ENCODE measurements at regions of chr3 and their contacts with region 1.

Region 1: DNA sequence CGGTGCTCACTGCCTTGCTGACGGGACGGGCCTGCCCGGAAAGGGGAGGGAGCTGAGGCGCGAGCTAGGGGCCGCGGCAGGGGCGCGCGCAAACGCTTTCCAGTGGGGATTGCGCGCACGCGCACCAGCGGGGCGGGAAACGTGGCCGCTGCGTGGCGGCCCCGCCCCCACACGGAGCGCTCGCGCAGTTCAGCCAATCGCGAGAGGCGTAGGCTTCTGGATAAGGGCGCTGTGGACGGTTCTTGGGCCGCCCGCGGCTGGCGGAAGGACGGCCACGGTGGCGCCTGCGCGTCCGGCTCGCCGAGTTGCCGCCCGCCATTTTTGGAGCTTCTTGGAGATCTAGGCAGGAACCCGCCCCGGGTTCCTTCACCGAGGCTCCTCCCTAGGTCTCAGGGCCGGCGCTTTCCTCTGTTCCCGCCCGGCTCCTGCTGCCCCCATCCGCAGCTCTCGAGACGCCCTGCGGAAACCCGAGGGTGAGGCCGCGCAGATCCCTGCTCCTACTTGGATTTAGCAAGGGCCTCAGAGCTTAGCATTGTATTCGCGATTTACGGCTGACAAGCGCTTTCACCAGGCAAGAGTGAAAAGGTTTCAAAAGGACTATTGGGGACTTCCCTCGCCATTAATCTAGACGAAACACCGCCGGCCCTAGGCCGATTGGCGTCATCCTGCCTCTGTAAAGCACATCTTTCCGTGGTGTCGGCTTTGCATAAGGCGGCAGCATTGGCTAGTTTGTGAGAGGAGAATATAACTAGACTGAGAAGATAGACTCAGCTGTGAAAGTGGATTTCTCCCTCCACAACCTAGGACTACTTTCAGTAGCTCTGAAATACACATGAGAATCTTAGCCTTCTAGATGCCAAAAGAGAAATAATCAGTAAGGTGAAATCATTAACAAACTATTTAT is 496 bp upstream of the STAG1 start:
- DNase-seq: peak; percentile 98
- ATAC-seq: peak; percentile 91
- H3K4me3 ChIP-seq: peak overlapping the region; percentile 77
- H3K27ac ChIP-seq: peak overlapping the region; percentile 99
- H3K4me1 ChIP-seq: peaks cover 3% of the 10 kb centered on the region
- H3K27me3 ChIP-seq: no peaks in the 10 kb centered on the region
- CTCF ChIP-seq: peak; percentile 37
- POLR2A ChIP-seq: peak; percentile 77; the same call in 1 of the 2 replicates
- RAD21 ChIP-seq: peak; percentile 35; the same call in 1 of the 2 replicates

Region 2: DNA sequence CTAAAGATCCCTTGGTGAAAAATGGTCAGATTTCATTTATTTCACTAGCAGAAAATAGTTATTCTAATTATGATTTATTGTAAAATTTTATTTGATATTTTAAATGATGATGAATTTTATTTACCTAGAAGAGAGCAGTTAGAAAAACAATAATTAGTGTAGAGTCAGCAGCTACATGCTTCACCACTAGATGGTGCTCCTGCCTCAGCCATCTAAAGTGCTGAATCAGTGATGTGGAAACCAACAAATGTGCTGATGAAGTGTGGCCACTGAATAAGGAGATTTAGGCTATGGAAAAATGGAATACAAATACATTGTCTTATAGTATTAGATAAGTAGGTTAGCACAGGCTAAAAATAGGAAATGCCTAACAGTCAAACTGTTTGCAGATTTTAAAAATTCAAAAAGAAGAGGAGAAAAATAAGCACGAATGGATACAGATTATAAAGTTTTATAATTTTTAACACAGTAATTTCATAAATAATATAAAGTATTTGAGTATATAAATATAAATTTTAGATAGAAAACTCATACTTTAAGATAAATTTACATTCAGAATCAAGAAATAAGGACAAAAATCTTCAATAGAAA is 677.4 kb before region 1 on chr3:
- CTCF ChIA-PET with region 1: interaction called, 7 read pairs
- POLR2A ChIA-PET with region 1: no interaction called
- dilution Hi-C with region 1: no loop called
- in situ Hi-C with region 1: loop called (anchors 10 kb)
- intact Hi-C with region 1: loop called (anchors 1 kb)
- DNase-seq: peak; percentile 80
- ATAC-seq: peak; percentile 62
- H3K4me3 ChIP-seq: no peak overlapping the region
- H3K27ac ChIP-seq: no peak overlapping the region
- H3K4me1 ChIP-seq: peaks cover 10% of the 10 kb centered on the region
- H3K27me3 ChIP-seq: no peaks in the 10 kb centered on the region
- CTCF ChIP-seq: peak; percentile 96
- POLR2A ChIP-seq: no peak
- RAD21 ChIP-seq: peak; percentile 95

Region 3: DNA sequence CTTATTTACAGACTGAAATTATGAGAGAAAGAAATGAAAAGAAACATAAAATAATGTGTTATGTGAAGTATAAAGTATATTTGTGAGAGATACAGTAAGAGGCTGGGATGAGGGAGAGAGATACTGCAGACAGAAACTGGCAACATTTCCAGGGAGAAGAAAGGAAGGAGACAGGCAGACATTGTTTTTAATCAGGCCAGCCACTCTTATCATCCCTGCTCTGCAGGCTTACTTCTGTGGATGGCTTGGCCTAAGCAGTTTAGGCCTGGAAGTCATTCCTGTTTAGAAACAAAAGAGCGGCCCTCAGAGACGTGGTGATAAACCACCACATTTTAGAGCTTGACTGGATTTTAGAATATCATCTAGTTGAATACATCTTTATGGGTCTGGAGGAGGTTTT is 490.1 kb before region 1 on chr3:
- CTCF ChIA-PET with region 1: no interaction called
- POLR2A ChIA-PET with region 1: no interaction called
- dilution Hi-C with region 1: no loop called
- in situ Hi-C with region 1: no loop called
- intact Hi-C with region 1: no loop called
- DNase-seq: no peak
- ATAC-seq: no peak
- H3K4me3 ChIP-seq: no peak overlapping the region
- H3K27ac ChIP-seq: no peak overlapping the region
- H3K4me1 ChIP-seq: peaks cover 3% of the 10 kb centered on the region; the same call in 1 of the 2 replicates
- H3K27me3 ChIP-seq: no peaks in the 10 kb centered on the region
- CTCF ChIP-seq: no peak
- POLR2A ChIP-seq: no peak
- RAD21 ChIP-seq: no peak

Region 4: GRCh38 chr3:136350132-136350531 is 402.5 kb before region 1 on chr3:
- CTCF ChIA-PET with region 1: interaction called, 16 read pairs
- POLR2A ChIA-PET with region 1: interaction called, 3 read pairs
- dilution Hi-C with region 1: no loop called
- in situ Hi-C with region 1: no loop called
- intact Hi-C with region 1: loop called (anchors 1 kb)
- DNase-seq: peak; percentile 98
- ATAC-seq: peak; percentile 76
- H3K4me3 ChIP-seq: peak overlapping the region; percentile 0; the same call in 1 of the 2 replicates
- H3K27ac ChIP-seq: peak overlapping the region; percentile 99
- H3K4me1 ChIP-seq: peaks cover 10% of the 10 kb centered on the region
- H3K27me3 ChIP-seq: no peaks in the 10 kb centered on the region
- CTCF ChIP-seq: no peak
- POLR2A ChIP-seq: no peak
- RAD21 ChIP-seq: no peak

Region 5: GRCh38 chr3:136464502-136464901 is 288.2 kb before region 1 on chr3:
- CTCF ChIA-PET with region 1: no interaction called
- POLR2A ChIA-PET with region 1: no interaction called
- dilution Hi-C with region 1: no loop called
- in situ Hi-C with region 1: no loop called
- intact Hi-C with region 1: loop called (anchors 2 kb)
- DNase-seq: peak; percentile 95
- ATAC-seq: peak; percentile 100
- H3K4me3 ChIP-seq: no peak overlapping the region
- H3K27ac ChIP-seq: peak overlapping the region; percentile 98
- H3K4me1 ChIP-seq: peaks cover 9% of the 10 kb centered on the region
- H3K27me3 ChIP-seq: no peaks in the 10 kb centered on the region
- CTCF ChIP-seq: no peak
- POLR2A ChIP-seq: no peak
- RAD21 ChIP-seq: peak; percentile 20; the same call in 1 of the 2 replicates

Region 6: DNA sequence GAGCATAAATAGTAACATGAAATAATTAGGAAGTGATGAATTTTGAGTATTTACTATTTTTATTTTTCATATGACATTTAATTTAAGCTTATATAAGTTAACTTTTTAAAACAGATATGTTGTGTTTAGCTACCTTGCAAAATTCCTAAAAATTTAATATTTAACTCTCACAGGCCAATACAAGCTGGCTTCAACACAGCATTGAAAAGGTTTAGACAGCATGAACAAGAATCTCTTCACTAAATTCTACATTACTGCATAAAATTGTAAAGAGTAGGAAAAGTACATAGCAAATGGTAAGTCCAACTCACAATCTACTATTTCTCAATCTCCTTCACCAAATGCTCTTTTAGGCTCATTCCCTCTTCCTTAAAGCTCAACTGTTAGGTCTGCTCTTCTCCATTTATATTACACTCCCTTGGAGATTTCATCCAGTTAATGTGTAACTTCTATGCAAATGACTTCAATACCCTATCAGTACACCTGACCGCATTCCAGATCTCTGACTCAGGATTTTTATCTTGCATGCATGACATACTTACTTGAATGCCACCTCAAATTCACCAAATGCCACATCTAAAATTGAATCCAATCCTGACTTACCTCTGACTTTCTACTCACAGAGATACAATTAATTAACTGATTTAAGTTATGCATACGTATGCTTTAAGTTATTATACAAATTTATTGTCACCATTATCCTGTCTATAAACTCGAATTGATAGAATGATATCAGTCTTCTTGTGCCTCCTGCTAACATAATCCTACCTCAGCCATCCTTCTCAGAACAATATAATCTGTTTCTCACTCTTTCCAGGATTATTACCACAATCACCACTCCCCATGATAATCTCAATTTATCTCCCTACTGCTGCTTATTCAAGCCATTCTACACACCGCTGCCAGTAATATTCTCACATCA is 127.5 kb before region 1 on chr3:
- CTCF ChIA-PET with region 1: no interaction called
- POLR2A ChIA-PET with region 1: no interaction called
- dilution Hi-C with region 1: no loop called
- in situ Hi-C with region 1: no loop called
- intact Hi-C with region 1: loop called (anchors 10 kb)
- DNase-seq: no peak
- ATAC-seq: no peak
- H3K4me3 ChIP-seq: no peak overlapping the region
- H3K27ac ChIP-seq: no peak overlapping the region
- H3K4me1 ChIP-seq: peaks cover 2% of the 10 kb centered on the region; the same call in 1 of the 2 replicates
- H3K27me3 ChIP-seq: no peaks in the 10 kb centered on the region
- CTCF ChIP-seq: no peak
- POLR2A ChIP-seq: no peak
- RAD21 ChIP-seq: no peak

Region 7: GRCh38 chr3:136645915-136646314 is 106.8 kb before region 1 on chr3:
- CTCF ChIA-PET with region 1: no interaction called
- POLR2A ChIA-PET with region 1: no interaction called
- dilution Hi-C with region 1: no loop called
- in situ Hi-C with region 1: no loop called
- intact Hi-C with region 1: no loop called
- DNase-seq: no peak
- ATAC-seq: no peak
- H3K4me3 ChIP-seq: no peak overlapping the region
- H3K27ac ChIP-seq: no peak overlapping the region
- H3K4me1 ChIP-seq: no peaks in the 10 kb centered on the region
- H3K27me3 ChIP-seq: no peaks in the 10 kb centered on the region
- CTCF ChIP-seq: no peak
- POLR2A ChIP-seq: no peak
- RAD21 ChIP-seq: no peak

Region 8: GRCh38 chr3:137013955-137014688 is 261.4 kb after region 1 on chr3:
- CTCF ChIA-PET with region 1: interaction called, 28 read pairs
- POLR2A ChIA-PET with region 1: interaction called, 12 read pairs
- dilution Hi-C with region 1: no loop called
- in situ Hi-C with region 1: loop called (anchors 5 kb)
- intact Hi-C with region 1: loop called (anchors 1 kb)
- DNase-seq: peak; percentile 86
- ATAC-seq: peak; percentile 92
- H3K4me3 ChIP-seq: peak overlapping the region; percentile 42
- H3K27ac ChIP-seq: peak overlapping the region; percentile 24
- H3K4me1 ChIP-seq: peaks cover 4% of the 10 kb centered on the region; the same call in 1 of the 2 replicates
- H3K27me3 ChIP-seq: no peaks in the 10 kb centered on the region
- CTCF ChIP-seq: peak; percentile 95
- POLR2A ChIP-seq: peak; percentile 63; the same call in 1 of the 2 replicates
- RAD21 ChIP-seq: peak; percentile 99

Measured in IMR-90 (cell line).